WTC11 (cell line): ENCODE measurements at regions of chr2 and their contacts with region 1.

Region 1: GRCh38 chr2:120552800-120553481 is 182.7 kb upstream of the GLI2 start:
- DNase-seq: peak; percentile 94
- ATAC-seq: peak; percentile 100
- H3K4me3 Mint-ChIP-seq: peak overlapping the region; percentile 62
- H3K27ac Mint-ChIP-seq: no peak overlapping the region
- H3K4me1 Mint-ChIP-seq: peaks cover 11% of the 10 kb centered on the region
- H3K27me3 Mint-ChIP-seq: peaks cover 59% of the 10 kb centered on the region
- CTCF ChIP-seq: peak; percentile 76

Region 2: GRCh38 chr2:120436885-120437603 is 115.9 kb before region 1 on chr2:
- CTCF ChIA-PET with region 1: interaction called, 19 read pairs
- POLR2A ChIA-PET with region 1: no interaction called
- DNase-seq: peak; percentile 84
- ATAC-seq: peak; percentile 78
- H3K4me3 Mint-ChIP-seq: no peak overlapping the region
- H3K27ac Mint-ChIP-seq: no peak overlapping the region
- H3K4me1 Mint-ChIP-seq: peaks cover 30% of the 10 kb centered on the region
- H3K27me3 Mint-ChIP-seq: peaks cover 77% of the 10 kb centered on the region
- CTCF ChIP-seq: peak; percentile 33; the same call in 1 of the 2 replicates

Region 3: GRCh38 chr2:120520929-120521912 is 31.7 kb before region 1 on chr2:
- CTCF ChIA-PET with region 1: interaction called, 34 read pairs
- POLR2A ChIA-PET with region 1: no interaction called
- DNase-seq: peak; percentile 84
- ATAC-seq: peak; percentile 83
- H3K4me3 Mint-ChIP-seq: no peak overlapping the region
- H3K27ac Mint-ChIP-seq: no peak overlapping the region
- H3K4me1 Mint-ChIP-seq: peaks cover 19% of the 10 kb centered on the region
- H3K27me3 Mint-ChIP-seq: peaks cover 44% of the 10 kb centered on the region
- CTCF ChIP-seq: peak; percentile 95

Region 4: DNA sequence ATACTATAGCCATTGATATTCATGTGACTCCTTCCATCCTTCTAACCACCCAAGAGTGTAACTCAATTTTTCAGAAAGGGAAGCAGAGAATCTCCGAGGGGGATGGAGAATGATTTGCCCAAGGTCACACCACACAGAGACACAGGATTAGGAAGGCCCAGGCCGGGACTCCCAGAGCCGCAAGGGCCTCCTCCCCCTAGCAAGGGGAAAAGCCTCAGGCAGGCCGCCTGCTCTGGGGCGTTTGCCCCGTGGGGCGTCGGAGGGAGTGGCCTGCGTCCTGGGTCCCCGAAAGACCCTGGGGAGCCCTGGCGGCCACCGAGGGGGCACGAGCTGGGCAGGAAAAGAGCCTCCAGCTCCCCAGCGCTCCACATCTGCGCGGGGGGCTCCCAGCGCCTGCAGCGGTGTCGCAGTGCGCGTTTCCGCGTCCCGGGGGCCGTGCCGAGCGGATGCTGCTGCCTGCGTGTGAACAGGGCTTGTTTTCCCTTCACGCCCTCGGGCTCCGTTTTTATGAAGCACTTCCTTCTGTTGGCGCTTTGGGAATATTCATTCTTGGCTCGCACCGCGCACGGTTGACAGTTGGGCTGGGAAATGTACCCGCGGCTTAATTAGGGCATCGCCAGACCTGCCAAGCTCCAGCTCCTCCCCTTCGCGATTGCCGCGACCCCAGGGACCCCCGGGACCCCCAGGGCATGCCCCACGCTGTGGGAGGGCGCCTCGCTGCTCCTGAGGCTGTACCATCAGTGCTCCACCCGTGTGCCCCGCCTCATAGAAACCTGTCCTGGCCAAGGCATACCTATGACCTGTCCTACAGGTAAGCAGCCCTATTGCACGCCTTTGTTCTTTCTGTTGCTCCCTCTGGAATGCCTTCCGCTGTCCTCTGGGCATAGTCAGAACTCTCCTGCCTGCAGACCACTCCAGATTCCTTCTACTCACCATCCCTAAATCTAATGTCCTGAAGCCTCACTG is 23.9 kb after region 1 on chr2:
- CTCF ChIA-PET with region 1: interaction called, 33 read pairs
- POLR2A ChIA-PET with region 1: no interaction called
- DNase-seq: no peak
- ATAC-seq: peak; percentile 50
- H3K4me3 Mint-ChIP-seq: peak overlapping the region; percentile 59
- H3K27ac Mint-ChIP-seq: no peak overlapping the region
- H3K4me1 Mint-ChIP-seq: peaks cover 19% of the 10 kb centered on the region
- H3K27me3 Mint-ChIP-seq: peaks cover 94% of the 10 kb centered on the region
- CTCF ChIP-seq: no peak

Region 5: DNA sequence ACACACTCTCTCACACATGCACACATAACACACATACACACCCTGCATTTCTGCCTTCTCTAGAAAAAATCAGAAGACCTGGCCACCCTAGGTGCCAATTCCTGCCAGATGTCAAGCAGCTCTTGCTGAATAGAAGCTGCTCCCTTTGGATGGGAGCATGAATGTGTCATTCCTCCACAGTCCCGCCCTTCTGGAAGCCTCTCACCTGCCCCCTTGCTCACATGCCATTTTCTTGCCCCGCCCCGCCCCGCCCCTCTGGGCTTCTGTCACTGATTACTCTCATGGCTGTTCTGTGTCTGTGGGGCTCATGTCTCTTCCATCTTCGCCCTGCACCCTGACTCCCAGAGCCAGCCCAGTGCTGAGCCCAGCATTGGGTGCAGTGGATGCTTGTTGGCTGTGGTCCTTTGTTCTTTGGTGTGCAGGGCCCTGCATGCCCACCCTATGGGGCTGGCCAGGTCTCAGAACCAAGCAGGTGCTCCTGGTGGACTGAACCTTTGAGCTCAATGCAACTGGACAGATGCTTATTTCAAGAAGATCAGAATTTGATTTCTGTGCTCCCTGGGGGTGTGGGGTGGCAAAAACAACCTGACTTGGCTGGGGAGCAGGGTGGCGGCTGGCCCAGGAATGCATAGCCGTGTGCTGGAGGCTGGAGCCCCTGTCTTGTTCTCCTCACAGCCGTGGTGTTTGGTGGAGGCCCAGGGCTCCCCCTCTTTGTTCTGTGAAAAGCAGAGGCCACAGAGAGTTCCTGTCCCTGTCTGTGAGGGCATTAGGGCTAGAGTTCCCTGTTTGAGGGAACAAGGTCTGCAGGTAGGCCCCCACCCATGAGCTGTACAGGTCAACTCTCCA is 42.1 kb after region 1 on chr2:
- CTCF ChIA-PET with region 1: interaction called, 20 read pairs
- POLR2A ChIA-PET with region 1: interaction called, 4 read pairs
- DNase-seq: peak; percentile 59
- ATAC-seq: peak; percentile 81
- H3K4me3 Mint-ChIP-seq: no peak overlapping the region
- H3K27ac Mint-ChIP-seq: no peak overlapping the region
- H3K4me1 Mint-ChIP-seq: peaks cover 41% of the 10 kb centered on the region
- H3K27me3 Mint-ChIP-seq: peaks cover 37% of the 10 kb centered on the region
- CTCF ChIP-seq: no peak

Region 6: GRCh38 chr2:120680136-120680761 is 127.3 kb after region 1 on chr2:
- CTCF ChIA-PET with region 1: interaction called, 12 read pairs
- POLR2A ChIA-PET with region 1: no interaction called
- DNase-seq: peak; percentile 88
- ATAC-seq: peak; percentile 80
- H3K4me3 Mint-ChIP-seq: no peak overlapping the region
- H3K27ac Mint-ChIP-seq: no peak overlapping the region
- H3K4me1 Mint-ChIP-seq: peaks cover 3% of the 10 kb centered on the region; the same call in 1 of the 2 replicates
- H3K27me3 Mint-ChIP-seq: peaks cover 39% of the 10 kb centered on the region
- CTCF ChIP-seq: peak; percentile 65